ENCODE measurements at regions of chr1 and their contacts with region 1.

Region 1: DNA sequence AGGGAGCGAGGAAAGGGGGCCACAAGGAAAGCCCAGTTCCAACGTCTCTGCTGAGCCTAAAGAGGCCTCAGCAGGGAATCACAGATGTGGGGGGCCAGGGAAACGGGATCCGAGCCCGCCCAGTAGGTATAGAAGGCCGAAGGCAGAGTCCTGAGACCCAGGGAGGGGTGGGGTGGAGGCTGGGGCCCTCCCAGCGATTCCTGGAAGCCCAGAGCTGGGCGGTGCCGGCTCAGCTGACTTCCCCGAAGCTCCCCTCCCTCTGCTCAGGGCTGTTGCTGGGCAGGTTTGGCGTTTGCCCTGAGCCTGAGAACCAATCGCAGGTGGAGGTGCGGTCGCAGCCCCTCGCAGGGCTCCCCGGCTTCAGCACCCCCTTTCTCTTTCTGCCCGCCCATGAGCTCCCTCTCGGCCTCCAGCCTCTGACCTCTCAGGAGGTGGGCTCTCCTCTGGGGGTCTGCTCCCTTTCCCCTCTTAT is 12.8 kb downstream of the ADAMTSL4 start:
- DNase-seq: peak; percentile 75 to 88 (median 79)
- H3K4me3 ChIP-seq: peak overlapping the region; percentile 72 to 79
- H3K4me3 Mint-ChIP-seq: peak overlapping the region; percentile 90 to 99 (median 93)
- H3K27ac ChIP-seq: peak overlapping the region; percentile 93
- H3K27ac Mint-ChIP-seq: peak overlapping the region; percentile 95 to 100 (median 99)
- H3K4me1 ChIP-seq: peaks cover 66% of the 10 kb centered on the region
- H3K4me1 Mint-ChIP-seq: peaks cover 33 to 70% (median 47%) of the 10 kb centered on the region in 4 donors
- H3K27me3 ChIP-seq: no peaks in the 10 kb centered on the region
- H3K27me3 Mint-ChIP-seq: no peaks in the 10 kb centered on the region

Region 2: DNA sequence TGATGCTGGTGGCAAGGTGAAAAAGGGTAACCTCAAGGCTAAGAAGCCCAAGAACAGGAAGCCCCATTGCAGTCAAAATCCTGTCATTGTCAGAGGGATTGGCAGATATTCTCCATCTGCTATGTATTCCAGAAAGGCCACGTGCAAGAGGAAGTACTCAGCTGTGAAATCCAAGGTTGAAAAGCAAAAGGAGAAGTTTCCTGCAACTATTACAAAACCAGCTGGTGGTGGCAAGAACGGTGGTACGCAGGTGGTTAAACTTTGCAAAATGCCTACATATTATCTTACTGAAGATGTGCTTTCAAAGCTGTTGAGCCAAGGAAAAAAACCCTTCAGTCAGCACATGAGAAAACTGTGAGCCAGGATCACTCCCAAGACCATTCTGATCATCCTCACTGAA is 508.1 kb before region 1 on chr1:
- CTCF ChIA-PET with region 1: no interaction called
- POLR2A ChIA-PET with region 1: no interaction called
- intact Hi-C with region 1: no loop called
- DNase-seq: no peak
- H3K4me3 ChIP-seq: no peak overlapping the region
- H3K4me3 Mint-ChIP-seq: no peak overlapping the region
- H3K27ac ChIP-seq: no peak overlapping the region
- H3K27ac Mint-ChIP-seq: no peak overlapping the region
- H3K4me1 ChIP-seq: no peaks in the 10 kb centered on the region
- H3K4me1 Mint-ChIP-seq: peaks cover 0 to 3% (median 1%) of the 10 kb centered on the region in 4 donors
- H3K27me3 ChIP-seq: no peaks in the 10 kb centered on the region
- H3K27me3 Mint-ChIP-seq: peaks cover 0 to 1% of the 10 kb centered on the region in 2 donors

Region 3: DNA sequence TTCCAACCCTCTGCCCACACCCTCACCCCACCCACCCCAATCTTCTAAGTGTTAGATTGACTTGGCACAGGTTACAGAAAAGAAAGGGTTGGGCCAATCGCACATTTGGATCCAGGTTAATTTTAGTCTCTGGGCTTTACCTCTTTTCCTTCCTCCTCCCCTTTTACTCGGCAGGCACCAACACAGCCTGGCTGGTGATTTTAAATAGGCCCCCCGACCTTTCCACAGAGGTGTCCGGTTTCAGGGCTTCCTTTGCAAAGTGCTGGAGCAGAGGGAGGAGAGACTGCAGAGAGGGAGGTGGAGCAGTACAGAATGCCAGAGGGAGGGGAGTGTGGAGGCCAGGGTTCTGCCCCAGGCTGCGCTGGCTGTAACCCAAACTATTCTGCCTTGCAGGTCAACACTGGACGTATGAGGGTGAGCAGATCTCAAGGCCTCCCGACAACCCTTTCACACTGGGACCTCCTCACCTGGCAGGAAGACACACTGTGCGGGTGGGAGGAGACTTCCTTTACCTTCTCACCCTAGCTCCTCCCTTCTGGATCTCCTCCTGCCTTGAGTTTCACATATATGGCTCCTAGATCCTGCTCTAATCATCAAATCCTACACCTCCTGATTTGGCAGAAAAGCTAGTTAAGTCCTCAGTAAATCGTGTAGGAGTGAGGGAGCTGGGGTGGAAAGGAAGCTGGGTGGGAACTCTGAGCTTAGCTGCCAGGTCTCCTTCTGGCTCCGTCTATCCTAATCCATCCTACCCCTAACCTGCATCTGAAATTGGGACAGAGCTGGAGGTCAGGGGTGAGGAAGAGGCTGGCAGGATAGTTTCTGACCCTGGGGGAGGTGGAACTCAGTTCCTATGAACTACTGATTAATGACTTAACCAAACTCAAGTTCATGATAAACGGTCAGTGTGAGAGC is 302.0 kb before region 1 on chr1:
- CTCF ChIA-PET with region 1: interaction called, 6 read pairs
- POLR2A ChIA-PET with region 1: interaction called, 4 read pairs
- intact Hi-C with region 1: loop called (anchors 2 kb)
- DNase-seq: no peak
- H3K4me3 ChIP-seq: no peak overlapping the region
- H3K4me3 Mint-ChIP-seq: no peak overlapping the region
- H3K27ac ChIP-seq: no peak overlapping the region
- H3K27ac Mint-ChIP-seq: peak overlapping the region in 1 of 7 donors; percentile 36
- H3K4me1 ChIP-seq: peaks cover 15% of the 10 kb centered on the region
- H3K4me1 Mint-ChIP-seq: peaks cover 8 to 25% (median 13%) of the 10 kb centered on the region in 4 donors
- H3K27me3 ChIP-seq: peaks cover 27% of the 10 kb centered on the region
- H3K27me3 Mint-ChIP-seq: peaks cover 19 to 24% of the 10 kb centered on the region in 2 donors

Region 4: DNA sequence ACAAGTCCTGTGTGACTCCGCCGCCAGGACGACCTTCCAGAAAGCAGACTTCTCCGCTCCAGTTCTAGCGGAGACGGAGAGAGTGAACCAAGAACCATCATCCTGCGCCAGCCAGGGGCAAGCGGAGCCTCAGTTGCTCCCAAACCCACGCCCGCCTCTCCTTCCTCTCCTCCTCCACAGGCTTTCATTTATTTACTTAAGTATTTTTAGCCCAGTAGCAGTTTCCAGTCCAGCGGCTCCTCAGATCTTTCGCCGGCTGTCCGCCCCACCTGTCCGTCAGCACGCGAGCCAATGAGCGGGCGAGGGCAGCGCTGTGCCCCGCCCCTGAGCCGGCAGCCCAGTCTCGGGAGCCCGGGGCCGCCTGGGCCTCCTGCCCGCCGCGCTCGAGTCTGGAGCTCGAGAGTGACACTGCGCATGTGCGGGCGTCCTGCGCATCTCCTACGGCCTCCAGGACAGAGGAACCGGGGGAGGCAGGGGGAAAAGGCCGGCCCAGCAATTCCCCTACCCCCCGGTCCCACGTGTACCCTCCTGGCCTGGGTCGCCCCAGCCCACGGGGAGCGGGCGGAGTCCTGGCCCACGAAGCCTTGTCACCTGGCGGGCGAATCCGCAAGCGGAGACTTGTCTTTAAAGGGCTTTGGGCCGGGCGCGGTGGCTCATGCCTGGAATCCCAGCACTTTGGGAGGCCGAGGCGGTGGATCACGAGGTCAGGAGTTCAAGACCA is 46.5 kb before region 1 on chr1 and contains the start of gene FALEC:
- CTCF ChIA-PET with region 1: interaction called, 12 read pairs
- POLR2A ChIA-PET with region 1: interaction called, 23 read pairs
- intact Hi-C with region 1: loop called (anchors 2 kb)
- DNase-seq: peak; percentile 87 to 91 (median 89)
- H3K4me3 ChIP-seq: peak within 1 kb of the TSS; percentile 69 to 73
- H3K4me3 Mint-ChIP-seq: peak within 1 kb of the TSS; percentile 83 to 94 (median 92)
- H3K27ac ChIP-seq: peak within 1 kb of the TSS; percentile 53
- H3K27ac Mint-ChIP-seq: peak within 1 kb of the TSS; percentile 61 to 93 (median 89)
- H3K4me1 ChIP-seq: peaks cover 11% of the 10 kb centered on the region
- H3K4me1 Mint-ChIP-seq: peaks cover 8 to 20% (median 12%) of the 10 kb centered on the region in 4 donors
- H3K27me3 ChIP-seq: no peaks in the 10 kb centered on the region
- H3K27me3 Mint-ChIP-seq: no peaks in the 10 kb centered on the region
- total RNA-seq, gene FALEC: 0.64 TPM in 1 of 2 experiments, not detected in the other

Region 5: GRCh38 chr1:150606463-150607148 is 44.6 kb after region 1 on chr1:
- CTCF ChIA-PET with region 1: interaction called, 501 read pairs
- POLR2A ChIA-PET with region 1: interaction called, 439 read pairs
- intact Hi-C with region 1: loop called (anchors 2 kb)
- DNase-seq: no peak
- H3K4me3 ChIP-seq: no peak overlapping the region
- H3K4me3 Mint-ChIP-seq: no peak overlapping the region
- H3K27ac ChIP-seq: no peak overlapping the region
- H3K27ac Mint-ChIP-seq: peak overlapping the region in 4 of 7 donors; percentile 13 to 79 (median 63)
- H3K4me1 ChIP-seq: peaks cover 15% of the 10 kb centered on the region
- H3K4me1 Mint-ChIP-seq: peaks cover 10 to 29% (median 13%) of the 10 kb centered on the region in 4 donors
- H3K27me3 ChIP-seq: no peaks in the 10 kb centered on the region
- H3K27me3 Mint-ChIP-seq: no peaks in the 10 kb centered on the region

Region 6: DNA sequence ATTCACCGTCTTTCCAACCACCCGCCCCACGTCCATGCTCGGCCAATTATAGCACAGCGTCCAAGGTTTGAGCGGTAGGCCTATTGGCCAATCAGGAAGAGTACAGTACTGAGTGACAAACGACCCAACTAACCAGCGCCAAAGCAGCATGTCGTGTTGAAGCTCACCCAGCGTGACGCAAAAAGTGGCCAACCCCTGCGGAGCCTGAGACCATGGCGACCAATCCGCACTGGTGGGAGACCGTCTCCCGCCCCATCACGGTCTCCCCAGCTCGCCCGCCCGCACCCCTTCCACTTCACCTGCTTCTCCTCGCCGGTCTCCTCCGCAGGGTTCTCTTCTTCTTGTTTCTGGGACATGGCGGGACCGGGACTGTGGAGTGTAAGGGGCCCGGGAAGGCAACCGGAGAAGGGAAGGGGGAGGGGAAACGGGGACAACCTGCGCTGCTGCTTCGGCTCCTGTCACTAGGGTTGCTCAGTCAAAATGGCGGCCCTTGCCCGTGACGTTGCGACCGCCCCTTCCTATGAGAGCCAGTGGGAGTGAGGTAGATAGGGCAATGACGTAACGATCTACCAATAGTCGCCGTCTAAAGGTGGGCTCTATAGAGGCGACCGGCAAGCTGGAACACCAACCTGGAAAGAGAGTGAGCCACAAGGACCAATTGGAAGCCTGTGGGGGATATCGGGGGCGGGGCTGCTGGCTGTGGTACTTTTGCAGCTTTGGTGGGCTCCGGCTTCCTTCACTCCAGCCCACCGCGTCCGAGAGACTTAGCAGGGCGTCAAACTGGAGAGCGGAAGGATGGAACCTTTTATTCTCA is 67.3 kb after region 1 on chr1 and contains the start of gene ENSA:
- CTCF ChIA-PET with region 1: interaction called, 501 read pairs
- POLR2A ChIA-PET with region 1: interaction called, 191 read pairs
- intact Hi-C with region 1: loop called (anchors 2 kb)
- DNase-seq: peak; percentile 98 to 99 (median 98)
- H3K4me3 ChIP-seq: peak within 1 kb of the TSS; percentile 78 to 80
- H3K4me3 Mint-ChIP-seq: no peak within 1 kb of the TSS
- H3K27ac ChIP-seq: peak within 1 kb of the TSS; percentile 98
- H3K27ac Mint-ChIP-seq: no peak within 1 kb of the TSS
- H3K4me1 ChIP-seq: peaks cover 29% of the 10 kb centered on the region
- H3K4me1 Mint-ChIP-seq: peaks cover 18 to 21% (median 21%) of the 10 kb centered on the region in 4 donors
- H3K27me3 ChIP-seq: no peaks in the 10 kb centered on the region
- H3K27me3 Mint-ChIP-seq: no peaks in the 10 kb centered on the region
- total RNA-seq, gene ENSA: 99.7 to 101 TPM

Region 7: GRCh38 chr1:150765296-150765976 is 203.4 kb after region 1 on chr1 and contains the start of gene CTSS:
- CTCF ChIA-PET with region 1: interaction called, 3 read pairs
- POLR2A ChIA-PET with region 1: interaction called, 10 read pairs
- intact Hi-C with region 1: loop called (anchors 5 kb)
- DNase-seq: peak in 4 of 5 donors; percentile 34 to 46 (median 38)
- H3K4me3 ChIP-seq: peak within 1 kb of the TSS; percentile 55 to 71
- H3K4me3 Mint-ChIP-seq: peak within 1 kb of the TSS; percentile 89 to 98 (median 93)
- H3K27ac ChIP-seq: peak within 1 kb of the TSS; percentile 51
- H3K27ac Mint-ChIP-seq: peak within 1 kb of the TSS; percentile 87 to 98 (median 95)
- H3K4me1 ChIP-seq: peaks cover 43% of the 10 kb centered on the region
- H3K4me1 Mint-ChIP-seq: peaks cover 29 to 58% (median 42%) of the 10 kb centered on the region in 4 donors
- H3K27me3 ChIP-seq: no peaks in the 10 kb centered on the region
- H3K27me3 Mint-ChIP-seq: no peaks in the 10 kb centered on the region
- total RNA-seq, gene CTSS: 119 TPM

Region 8: GRCh38 chr1:151059078-151059907 is 497.3 kb after region 1 on chr1 and contains the start of gene CDC42SE1:
- CTCF ChIA-PET with region 1: no interaction called
- POLR2A ChIA-PET with region 1: interaction called, 3 read pairs
- intact Hi-C with region 1: loop called (anchors 5 kb)
- DNase-seq: peak; percentile 81 to 85 (median 85)
- H3K4me3 ChIP-seq: peak within 1 kb of the TSS; percentile 89 to 93
- H3K4me3 Mint-ChIP-seq: peak within 1 kb of the TSS; percentile 96 to 100 (median 100)
- H3K27ac ChIP-seq: peak within 1 kb of the TSS; percentile 90
- H3K27ac Mint-ChIP-seq: peak within 1 kb of the TSS; percentile 98 to 100 (median 99)
- H3K4me1 ChIP-seq: peaks cover 45% of the 10 kb centered on the region
- H3K4me1 Mint-ChIP-seq: peaks cover 31 to 70% (median 38%) of the 10 kb centered on the region in 4 donors
- H3K27me3 ChIP-seq: no peaks in the 10 kb centered on the region
- H3K27me3 Mint-ChIP-seq: peaks cover 0 to 1% of the 10 kb centered on the region in 2 donors
- total RNA-seq, gene CDC42SE1: 478 to 483 TPM